ENCODE measurements at regions of chr3 and their contacts with region 1.

Region 1: DNA sequence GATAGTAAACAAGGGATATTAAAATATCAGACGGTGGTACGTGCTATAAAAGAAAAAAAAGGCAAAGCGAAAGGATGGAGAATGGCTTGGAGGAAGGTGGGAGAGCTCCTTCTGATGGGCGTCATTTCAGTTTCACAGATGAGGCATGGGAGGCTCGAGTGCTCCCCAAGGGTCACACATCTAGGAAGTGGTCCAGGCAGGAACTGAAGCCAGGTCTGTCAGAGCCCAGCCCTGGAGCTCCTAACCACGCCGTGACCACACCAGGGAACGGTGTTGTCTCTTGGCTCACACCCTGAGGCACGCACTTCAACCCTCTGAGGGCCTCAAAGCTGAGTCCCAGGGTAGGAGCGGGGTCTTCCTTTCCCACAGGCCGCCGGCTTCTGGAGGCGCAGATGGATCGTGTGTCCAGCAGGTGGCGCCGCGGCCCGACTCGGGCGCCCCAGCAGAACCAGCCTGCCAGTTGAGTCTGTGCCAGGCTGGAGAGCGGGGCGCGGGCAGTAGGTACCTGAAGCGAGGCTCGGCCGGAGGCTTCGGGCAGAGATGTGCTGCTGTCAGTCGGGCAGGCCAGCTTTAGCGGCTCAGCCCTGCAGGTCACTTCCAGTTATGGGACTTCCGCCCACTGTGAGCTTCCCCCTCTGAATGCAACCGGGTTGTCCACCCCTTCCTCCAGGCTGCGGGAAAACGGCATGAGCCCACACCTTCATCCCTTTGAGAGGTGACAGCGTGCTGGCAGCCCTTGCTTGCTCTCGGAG is 68.1 kb downstream of the SLC6A1 start:
- DNase-seq: peak; percentile 49 to 80 (median 61)
- ATAC-seq: peak in 3 of 4 donors; percentile 78 to 82 (median 79)
- H3K4me3 ChIP-seq: peak overlapping the region in 6 of 12 donors; percentile 13 to 43 (median 33)
- H3K27ac ChIP-seq: no peak overlapping the region
- H3K4me1 ChIP-seq: peaks cover 0 to 10% (median 3%) of the 10 kb centered on the region in 12 donors
- H3K27me3 ChIP-seq: peaks cover 0 to 34% (median 0%) of the 10 kb centered on the region in 9 donors
- CTCF ChIP-seq: peak; percentile 79 to 95 (median 86)
- POLR2A ChIP-seq: no peak

Region 2: GRCh38 chr3:10758304-10759061 is 302.2 kb before region 1 on chr3:
- intact Hi-C with region 1: loop called (anchors 1 to 10 kb)
- DNase-seq: peak in 4 of 5 donors; percentile 36 to 45 (median 41)
- ATAC-seq: peak; percentile 69 to 88 (median 84)
- H3K4me3 ChIP-seq: no peak overlapping the region
- H3K27ac ChIP-seq: no peak overlapping the region
- H3K4me1 ChIP-seq: no peaks in the 10 kb centered on the region
- H3K27me3 ChIP-seq: peaks cover 0 to 43% (median 11%) of the 10 kb centered on the region in 9 donors
- CTCF ChIP-seq: peak; percentile 49 to 74 (median 64)
- POLR2A ChIP-seq: no peak

Region 3: DNA sequence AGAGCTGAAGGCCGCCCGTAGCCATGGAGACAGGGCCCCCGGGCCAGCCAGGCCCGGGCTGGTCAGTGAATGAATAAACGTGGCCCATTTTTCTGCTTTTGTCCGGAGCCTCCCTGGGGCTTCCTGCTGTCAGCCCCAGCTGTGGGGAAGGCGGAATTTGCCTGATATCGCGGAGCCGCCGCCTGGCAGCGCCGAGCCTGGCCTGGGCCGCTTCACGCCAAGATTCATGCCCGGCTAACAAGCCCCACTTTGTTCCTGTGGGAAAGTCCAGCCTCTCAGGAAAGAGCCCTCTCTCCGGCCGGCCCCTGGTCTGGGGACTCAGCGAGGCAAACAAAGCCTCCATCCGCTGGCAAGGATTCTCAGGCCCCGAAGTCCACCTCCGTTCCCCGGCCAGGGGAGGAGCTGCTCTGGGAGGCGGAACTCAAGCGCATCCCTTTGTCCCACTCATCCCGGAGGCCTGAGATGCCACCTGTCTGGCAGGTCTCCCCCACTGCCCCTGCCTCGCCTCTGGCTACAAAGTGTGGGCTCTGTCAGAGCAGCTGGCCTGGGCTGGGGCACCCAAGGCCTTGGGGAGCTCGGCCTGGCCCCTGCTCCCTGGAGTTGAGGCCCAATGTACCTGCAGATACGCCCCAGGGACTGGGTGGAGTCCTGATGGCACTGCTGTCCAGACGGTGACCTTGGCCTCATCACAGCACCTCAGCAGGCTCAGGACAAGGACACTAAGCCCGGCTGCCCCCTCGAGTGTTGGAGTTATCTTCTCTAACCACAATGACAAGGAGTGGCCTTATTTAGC is 296.2 kb before region 1 on chr3:
- intact Hi-C with region 1: loop called in 9 of 10 experiments (anchors 2 to 10 kb)
- DNase-seq: no peak
- ATAC-seq: no peak
- H3K4me3 ChIP-seq: no peak overlapping the region
- H3K27ac ChIP-seq: no peak overlapping the region
- H3K4me1 ChIP-seq: no peaks in the 10 kb centered on the region
- H3K27me3 ChIP-seq: peaks cover 0 to 83% (median 17%) of the 10 kb centered on the region in 9 donors
- CTCF ChIP-seq: no peak
- POLR2A ChIP-seq: no peak

Region 4: DNA sequence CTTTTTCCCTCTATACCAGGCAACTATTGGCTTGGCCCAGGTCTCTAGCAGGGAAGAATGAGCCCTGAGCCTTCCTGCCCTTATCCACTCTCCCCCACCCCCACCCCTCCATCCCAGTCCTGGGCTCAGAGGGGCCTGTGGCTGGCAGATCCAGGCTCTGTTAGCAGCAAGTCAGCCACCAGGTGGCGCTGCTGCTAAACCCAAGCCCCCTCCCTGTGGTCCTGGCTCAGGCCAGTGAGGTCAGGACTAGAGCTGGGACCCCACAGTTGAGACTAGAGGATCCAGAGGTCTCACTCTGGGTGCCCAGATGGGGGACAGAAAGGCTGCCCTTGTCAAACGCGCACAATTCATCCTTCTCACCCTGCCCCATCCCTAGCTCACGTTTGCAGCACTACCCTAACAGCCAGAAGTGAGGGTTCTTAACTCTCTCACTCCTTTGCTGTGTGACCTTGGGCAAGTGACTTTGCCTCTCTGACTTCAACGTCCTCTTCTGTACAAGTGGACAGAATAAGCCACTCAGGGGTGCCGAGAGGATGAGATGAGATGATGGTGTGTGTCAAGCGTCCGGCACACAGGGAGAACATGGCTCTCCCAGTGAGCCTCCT is 114.9 kb before region 1 on chr3:
- intact Hi-C with region 1: loop called (anchors 1 to 2 kb)
- DNase-seq: peak; percentile 47 to 76 (median 61)
- ATAC-seq: peak; percentile 20 to 89 (median 84)
- H3K4me3 ChIP-seq: no peak overlapping the region
- H3K27ac ChIP-seq: no peak overlapping the region
- H3K4me1 ChIP-seq: peaks cover 0 to 8% (median 0%) of the 10 kb centered on the region in 12 donors
- H3K27me3 ChIP-seq: peaks cover 0 to 31% (median 0%) of the 10 kb centered on the region in 9 donors
- CTCF ChIP-seq: peak; percentile 71 to 94 (median 83)
- POLR2A ChIP-seq: no peak

Region 5: GRCh38 chr3:11144996-11145395 is 84.3 kb after region 1 on chr3:
- intact Hi-C with region 1: no loop called
- DNase-seq: no peak
- ATAC-seq: no peak
- H3K4me3 ChIP-seq: no peak overlapping the region
- H3K27ac ChIP-seq: no peak overlapping the region
- H3K4me1 ChIP-seq: peaks cover 0 to 17% (median 0%) of the 10 kb centered on the region in 12 donors
- H3K27me3 ChIP-seq: peaks cover 0 to 5% (median 0%) of the 10 kb centered on the region in 9 donors
- CTCF ChIP-seq: no peak
- POLR2A ChIP-seq: no peak

Region 6: DNA sequence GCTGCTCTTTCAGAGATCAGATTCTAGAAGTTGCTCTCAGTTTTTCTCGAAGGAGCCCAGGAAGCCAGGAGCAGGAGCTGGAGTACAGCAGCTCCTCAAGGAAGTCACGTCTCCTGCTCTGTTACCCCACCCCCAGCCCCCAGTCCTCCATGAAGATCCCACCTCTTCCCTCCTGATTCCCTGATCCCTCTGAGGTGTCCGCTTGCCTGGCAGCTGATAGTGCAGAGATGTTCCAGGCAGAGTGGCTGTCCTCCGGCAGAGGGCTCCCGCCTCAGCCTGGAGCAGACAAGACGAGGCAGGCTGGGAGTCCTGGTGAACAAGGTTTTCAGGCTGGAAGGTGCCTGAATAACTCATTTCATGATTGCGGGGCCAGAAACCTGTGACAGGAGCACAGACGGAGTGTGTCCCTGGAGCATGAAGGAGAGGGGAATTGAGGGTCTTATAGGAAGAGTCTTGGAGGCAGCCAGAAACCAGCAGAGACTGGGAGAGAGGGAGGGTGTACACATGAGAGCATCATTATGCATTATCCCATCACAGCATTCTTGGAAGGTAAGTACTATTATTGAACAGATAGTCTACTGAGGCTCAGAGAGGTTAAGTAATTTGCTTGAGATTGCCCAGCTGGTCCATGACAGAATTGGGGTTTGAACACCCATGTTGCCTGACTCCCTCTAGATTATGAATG is 94.8 kb after region 1 on chr3:
- intact Hi-C with region 1: loop called in 1 of 10 experiments (anchors 5 kb)
- DNase-seq: peak; percentile 59 to 79 (median 70)
- ATAC-seq: peak; percentile 79 to 92 (median 88)
- H3K4me3 ChIP-seq: peak overlapping the region; percentile 42 to 68 (median 55)
- H3K27ac ChIP-seq: peak overlapping the region in 4 of 12 donors; percentile 46 to 72 (median 60)
- H3K4me1 ChIP-seq: peaks cover 0 to 65% (median 10%) of the 10 kb centered on the region in 12 donors
- H3K27me3 ChIP-seq: peaks cover 0 to 24% (median 10%) of the 10 kb centered on the region in 9 donors
- CTCF ChIP-seq: peak; percentile 39 to 80 (median 59)
- POLR2A ChIP-seq: no peak

Region 7: DNA sequence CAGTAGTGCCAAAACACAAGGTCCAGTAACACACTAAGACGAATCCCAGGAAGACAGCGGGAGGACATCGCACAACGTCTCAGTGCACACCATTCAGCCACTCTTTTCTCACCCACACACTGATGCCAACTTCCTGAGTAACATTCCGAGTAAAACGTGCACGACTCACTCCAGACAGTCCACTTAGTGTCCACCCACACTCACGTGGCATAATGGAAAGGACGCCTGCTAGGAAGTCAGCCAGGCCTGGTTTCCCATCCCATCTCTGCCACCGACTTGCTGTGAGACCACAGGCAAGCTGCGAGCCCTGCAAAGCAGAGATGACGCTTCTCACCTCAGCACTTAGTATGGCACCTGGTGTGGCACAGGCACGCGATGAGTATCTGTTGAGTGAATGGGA is 619.8 kb after region 1 on chr3:
- intact Hi-C with region 1: no loop called
- DNase-seq: no peak
- ATAC-seq: no peak
- H3K4me3 ChIP-seq: no peak overlapping the region
- H3K27ac ChIP-seq: no peak overlapping the region
- H3K4me1 ChIP-seq: no peaks in the 10 kb centered on the region
- H3K27me3 ChIP-seq: no peaks in the 10 kb centered on the region
- CTCF ChIP-seq: no peak
- POLR2A ChIP-seq: no peak

Measured in heart left ventricle (tissue), 16 donors.